ENCODE measurements at regions of chr20 and their contacts with region 1.

Region 1: GRCh38 chr20:35541783-35542588 is at the start of gene ERGIC3:
- DNase-seq: peak; percentile 99
- total RNA-seq, gene ERGIC3: 91.2 TPM

Region 2: DNA sequence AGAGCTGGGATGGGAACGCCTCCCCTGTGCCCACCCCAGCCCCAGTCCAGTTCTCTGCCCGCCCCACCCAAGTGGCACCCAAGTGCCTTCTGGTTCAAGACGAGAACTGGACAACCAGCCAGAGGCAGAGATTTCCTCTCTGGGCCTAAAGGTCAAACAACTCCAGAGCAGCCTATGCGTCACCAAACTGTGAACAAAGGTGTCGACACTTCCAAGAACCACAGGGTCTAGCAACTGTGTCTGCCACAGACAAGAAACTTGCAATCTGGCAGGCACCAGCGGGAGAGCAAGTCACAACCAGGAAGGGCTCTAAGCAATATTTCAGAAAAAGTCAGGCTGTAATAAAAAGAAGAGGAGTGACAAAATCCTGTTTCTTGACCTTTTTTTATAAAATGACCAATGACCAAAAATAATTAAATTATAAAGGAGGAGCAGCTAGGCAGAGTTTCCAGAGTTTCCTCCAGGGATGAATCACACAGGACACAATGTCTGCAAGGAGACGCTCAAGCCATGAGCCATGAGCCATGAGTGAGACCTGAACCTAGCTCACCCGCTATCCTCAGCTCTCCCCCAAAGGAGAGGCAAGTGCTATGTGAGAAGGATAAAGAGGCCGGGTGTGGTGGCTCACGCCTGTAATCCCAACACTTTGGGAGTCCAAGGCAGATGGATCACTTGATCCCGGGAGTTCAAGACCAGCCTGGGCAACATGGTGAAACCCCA is 406.0 kb before region 1 on chr20:
- intact Hi-C with region 1: no loop called
- DNase-seq: no peak

Region 3: DNA sequence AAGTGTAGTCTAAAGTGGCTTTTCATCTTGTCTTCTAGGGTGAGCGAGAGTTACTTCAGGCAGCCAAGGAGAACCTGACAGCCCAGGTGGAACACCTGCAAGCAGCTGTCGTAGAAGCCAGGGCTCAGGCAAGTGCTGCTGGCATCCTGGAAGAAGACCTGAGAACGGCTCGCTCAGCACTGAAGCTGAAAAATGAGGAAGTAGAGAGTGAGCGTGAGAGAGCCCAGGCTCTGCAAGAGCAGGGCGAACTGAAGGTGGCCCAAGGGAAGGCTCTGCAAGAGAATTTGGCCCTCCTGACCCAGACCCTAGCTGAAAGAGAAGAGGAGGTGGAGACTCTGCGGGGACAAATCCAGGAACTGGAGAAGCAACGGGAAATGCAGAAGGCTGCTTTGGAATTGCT is 39.6 kb before region 1 on chr20:
- intact Hi-C with region 1: no loop called
- DNase-seq: no peak

Region 4: GRCh38 chr20:35601008-35601973 is 59.3 kb after region 1 on chr20:
- intact Hi-C with region 1: no loop called
- DNase-seq: peak; percentile 92

Region 5: DNA sequence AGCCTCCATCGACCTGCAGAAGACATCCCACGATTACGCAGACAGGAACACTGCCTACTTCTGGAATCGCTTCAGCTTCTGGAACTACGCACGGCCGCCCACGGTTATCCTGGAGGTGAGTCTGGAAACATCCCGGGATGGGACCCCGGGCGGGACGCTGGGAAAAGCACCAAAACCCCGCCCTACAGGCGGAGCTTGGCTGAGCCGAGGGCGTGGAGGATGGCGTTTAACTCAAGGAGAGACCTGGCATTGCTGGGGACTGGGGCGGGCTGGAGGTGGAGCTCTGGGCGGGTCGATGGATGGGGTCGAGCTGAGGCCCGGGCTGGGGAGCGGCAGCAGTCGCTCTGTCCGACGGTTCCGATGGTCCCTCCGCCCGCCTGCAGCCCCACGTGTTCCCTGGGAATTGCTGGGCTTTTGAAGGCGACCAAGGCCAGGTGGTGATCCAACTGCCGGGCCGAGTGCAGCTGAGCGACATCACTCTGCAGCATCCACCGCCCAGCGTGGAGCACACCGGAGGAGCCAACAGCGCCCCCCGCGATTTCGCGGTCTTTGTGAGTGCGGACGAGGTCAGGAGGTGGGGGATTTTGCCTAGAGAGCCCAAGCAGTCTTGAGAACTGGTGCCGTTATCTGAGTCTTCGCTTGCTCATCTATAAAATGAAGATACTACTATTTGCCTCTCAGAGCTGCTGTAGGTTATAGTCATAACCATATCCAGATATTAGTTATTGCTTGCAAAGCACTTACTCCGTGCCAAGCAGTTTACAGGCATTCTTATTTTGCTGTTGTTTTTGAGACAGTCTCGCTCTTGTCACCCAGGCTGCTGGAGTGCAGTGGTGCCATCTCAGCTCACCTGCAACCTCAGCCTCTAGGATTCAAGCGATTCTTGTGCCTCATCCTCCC is 77.5 kb after region 1 on chr20:
- intact Hi-C with region 1: loop called (anchors 5 kb)
- DNase-seq: peak; percentile 89

Measured in cardiac septum (tissue), 1 donor.